PC-9 (cell line): ENCODE measurements at regions of chr5 and their contacts with region 1.

Region 1: GRCh38 chr5:142699184-142699720 is 13.4 kb upstream of the FGF1 start:
- DNase-seq: peak; percentile 73 to 80
- H3K4me3 ChIP-seq: no peak overlapping the region
- H3K27ac ChIP-seq: no peak overlapping the region
- H3K4me1 ChIP-seq: peaks cover 12% of the 10 kb centered on the region
- H3K27me3 ChIP-seq: no peaks in the 10 kb centered on the region
- CTCF ChIP-seq: peak; percentile 98

Region 2: GRCh38 chr5:141992349-141992963 is 706.8 kb before region 1 on chr5:
- CTCF ChIA-PET with region 1: no interaction called
- POLR2A ChIA-PET with region 1: no interaction called
- intact Hi-C with region 1: loop called (anchors 5 kb)
- DNase-seq: peak; percentile 55 to 60
- H3K4me3 ChIP-seq: no peak overlapping the region
- H3K27ac ChIP-seq: no peak overlapping the region
- H3K4me1 ChIP-seq: no peaks in the 10 kb centered on the region
- H3K27me3 ChIP-seq: no peaks in the 10 kb centered on the region
- CTCF ChIP-seq: peak; percentile 90

Region 3: GRCh38 chr5:142221091-142221860 is 478.0 kb before region 1 on chr5:
- CTCF ChIA-PET with region 1: no interaction called
- POLR2A ChIA-PET with region 1: no interaction called
- intact Hi-C with region 1: no loop called
- DNase-seq: no peak
- H3K4me3 ChIP-seq: no peak overlapping the region
- H3K27ac ChIP-seq: no peak overlapping the region
- H3K4me1 ChIP-seq: peaks cover 53% of the 10 kb centered on the region
- H3K27me3 ChIP-seq: no peaks in the 10 kb centered on the region
- CTCF ChIP-seq: no peak

Region 4: GRCh38 chr5:142597546-142598341 is 101.5 kb before region 1 on chr5:
- CTCF ChIA-PET with region 1: no interaction called
- POLR2A ChIA-PET with region 1: no interaction called
- intact Hi-C with region 1: loop called (anchors 5 kb)
- DNase-seq: peak; percentile 55 to 79
- H3K4me3 ChIP-seq: peak overlapping the region; percentile 11; the same call in 1 of the 2 replicates
- H3K27ac ChIP-seq: peak overlapping the region; percentile 75
- H3K4me1 ChIP-seq: peaks cover 32% of the 10 kb centered on the region
- H3K27me3 ChIP-seq: no peaks in the 10 kb centered on the region
- CTCF ChIP-seq: no peak; the same call in 1 of the 2 replicates

Region 5: GRCh38 chr5:142611154-142611553 is 88.1 kb before region 1 on chr5:
- CTCF ChIA-PET with region 1: interaction called, 4 read pairs
- POLR2A ChIA-PET with region 1: no interaction called
- intact Hi-C with region 1: loop called (anchors 1 kb)
- DNase-seq: peak; percentile 49 to 72
- H3K4me3 ChIP-seq: no peak overlapping the region
- H3K27ac ChIP-seq: no peak overlapping the region
- H3K4me1 ChIP-seq: no peaks in the 10 kb centered on the region
- H3K27me3 ChIP-seq: no peaks in the 10 kb centered on the region
- CTCF ChIP-seq: peak; percentile 79